ENCODE measurements at regions of chr10 and their contacts with region 1.

Region 1: GRCh38 chr10:98134431-98135221 is at the start of gene R3HCC1L:
- DNase-seq: peak; percentile 90
- H3K4me3 Mint-ChIP-seq: peak within 1 kb of the TSS; percentile 89
- H3K27ac Mint-ChIP-seq: peak within 1 kb of the TSS; percentile 80
- H3K4me1 Mint-ChIP-seq: peaks cover 36% of the 10 kb centered on the region
- H3K27me3 Mint-ChIP-seq: no peaks in the 10 kb centered on the region
- total RNA-seq, gene R3HCC1L: 17.9 and 18.4 TPM in 2 replicates

Region 2: DNA sequence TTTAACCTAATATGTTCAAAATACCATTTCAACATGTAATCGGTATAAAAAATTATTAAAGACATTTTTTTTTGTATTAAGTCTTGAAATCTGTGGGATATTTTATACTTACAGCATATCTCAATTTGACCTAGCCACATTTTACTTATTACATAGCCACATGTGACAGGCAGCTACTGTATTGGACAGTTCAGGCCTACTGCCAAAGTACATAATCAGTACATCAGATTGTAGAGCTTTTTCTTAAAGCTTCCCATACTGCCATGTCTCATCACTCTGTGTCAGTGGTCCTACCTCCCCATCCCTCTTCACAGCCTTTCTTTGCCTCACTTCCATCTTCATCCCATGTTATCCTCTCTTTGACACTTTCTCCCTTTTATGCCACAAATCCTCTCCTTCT is 90.4 kb after region 1 on chr10:
- intact Hi-C with region 1: loop called (anchors 5 kb)
- DNase-seq: no peak
- H3K4me3 Mint-ChIP-seq: no peak overlapping the region
- H3K27ac Mint-ChIP-seq: no peak overlapping the region
- H3K4me1 Mint-ChIP-seq: peaks cover 12% of the 10 kb centered on the region
- H3K27me3 Mint-ChIP-seq: no peaks in the 10 kb centered on the region

Region 3: DNA sequence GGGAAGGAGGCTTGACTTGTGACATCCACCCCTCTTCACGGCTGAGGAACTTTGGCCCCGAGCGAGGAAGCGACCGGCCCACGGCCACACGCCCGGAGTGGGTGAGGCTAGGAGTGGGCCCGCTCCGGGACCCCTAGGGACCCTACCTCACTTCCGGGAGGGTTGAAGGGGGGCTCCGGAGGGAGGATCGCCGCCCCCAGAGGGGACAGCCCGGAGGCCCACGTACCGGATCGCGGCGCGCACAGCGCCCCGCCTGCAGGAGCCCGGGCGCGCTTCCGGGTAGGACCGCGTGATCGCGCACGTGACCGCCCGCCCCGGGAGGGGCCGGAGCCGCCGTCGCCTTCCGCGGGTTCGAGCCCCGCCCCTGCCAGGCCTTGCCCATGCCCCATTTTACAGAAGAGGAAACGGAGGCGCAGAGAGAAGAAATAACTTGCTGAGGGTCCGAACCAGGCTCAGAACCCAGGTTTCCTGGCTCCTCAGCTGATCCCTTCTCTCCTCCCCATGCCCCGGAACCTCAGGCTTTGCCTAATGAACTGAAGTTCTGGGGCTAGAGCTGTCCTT is 312.1 kb after region 1 on chr10 and contains the start of gene HPS1:
- intact Hi-C with region 1: loop called (anchors 10 kb)
- DNase-seq: peak; percentile 75
- H3K4me3 Mint-ChIP-seq: peak within 1 kb of the TSS; percentile 90
- H3K27ac Mint-ChIP-seq: peak within 1 kb of the TSS; percentile 81
- H3K4me1 Mint-ChIP-seq: peaks cover 26% of the 10 kb centered on the region
- H3K27me3 Mint-ChIP-seq: peaks cover 14% of the 10 kb centered on the region
- total RNA-seq, gene HPS1: 61.2 and 62.0 TPM in 2 replicates